Lower leg skin (tissue), 4 donors: ENCODE measurements at regions of chr1 and their contacts with region 1.

Region 1: GRCh38 chr1:228754646-228755268 is 19.5 kb downstream of the RHOU start:
- DNase-seq: no peak
- H3K4me3 ChIP-seq: no peak overlapping the region
- CTCF ChIP-seq: no peak
- POLR2A ChIP-seq: no peak

Region 2: DNA sequence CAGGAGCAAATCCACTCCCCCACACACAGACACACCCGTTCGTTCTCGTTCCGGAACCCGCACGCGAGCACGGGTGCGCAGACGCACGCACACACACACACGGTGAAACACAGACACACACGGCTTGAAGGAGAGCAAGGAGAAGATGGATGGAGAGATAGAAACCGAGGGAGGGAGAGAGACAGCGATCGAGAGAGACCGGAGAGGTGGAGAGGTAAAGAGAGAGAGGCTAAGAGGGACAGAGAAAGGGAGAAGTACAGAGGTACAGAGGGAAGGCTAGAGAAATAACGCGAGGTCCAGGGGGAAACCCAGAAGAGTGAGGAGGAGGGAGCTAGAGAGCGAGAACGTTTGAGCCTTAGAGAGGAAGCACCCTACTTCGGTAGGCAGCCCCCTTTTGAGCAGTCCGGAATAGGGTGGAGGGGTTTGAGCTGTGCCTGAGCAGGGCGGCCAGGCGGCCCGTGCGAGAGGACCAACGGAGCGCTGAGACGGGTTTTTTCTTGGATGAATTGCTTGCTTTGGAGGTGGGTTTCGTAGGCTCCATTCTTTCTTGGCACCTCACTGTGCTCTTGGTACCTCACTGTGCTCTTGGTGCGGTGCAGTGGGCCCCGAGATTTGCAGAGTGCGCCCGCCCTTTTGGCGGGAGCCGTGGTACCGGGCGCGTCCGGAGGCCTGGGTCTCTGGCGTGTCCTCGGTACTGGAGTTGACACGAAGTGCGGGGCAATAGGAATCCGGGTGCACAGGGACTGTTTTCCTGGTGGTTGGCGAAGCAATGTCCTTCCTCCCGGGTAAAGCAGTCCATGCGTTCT is 107.8 kb before region 1 on chr1:
- intact Hi-C with region 1: no loop called
- DNase-seq: peak in 1 of 2 donors; percentile 90
- H3K4me3 ChIP-seq: peak overlapping the region; percentile 22
- CTCF ChIP-seq: no peak
- POLR2A ChIP-seq: no peak

Region 3: DNA sequence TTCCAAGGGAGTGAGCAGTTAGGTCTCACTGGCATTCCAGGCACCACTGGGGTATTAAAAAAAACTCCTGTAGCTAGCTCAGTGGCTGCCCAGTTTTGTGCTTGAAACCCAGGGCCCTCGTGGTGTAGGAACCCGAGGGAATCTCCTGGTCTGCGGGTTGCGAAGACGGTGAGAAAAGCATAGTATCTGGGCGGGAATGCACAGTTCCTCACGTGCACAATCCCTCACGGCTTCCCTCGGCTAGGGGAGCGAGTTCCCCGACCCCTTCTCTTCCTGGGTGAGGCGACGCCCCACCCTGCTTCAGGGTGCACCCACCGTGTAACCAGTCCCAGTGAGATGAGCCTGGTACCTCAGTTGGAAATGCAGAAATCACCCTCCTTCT is 1721.9 kb after region 1 on chr1:
- intact Hi-C with region 1: loop called (anchors 5 kb)
- DNase-seq: no peak
- H3K4me3 ChIP-seq: no peak overlapping the region
- CTCF ChIP-seq: no peak
- POLR2A ChIP-seq: no peak